HCT116 (cell line): ENCODE measurements at regions of chr2 and their contacts with region 1.

Region 1: GRCh38 chr2:156589381-156590079 is 153.4 kb downstream of the GPD2 start:
- DNase-seq: peak; percentile 27
- ATAC-seq: peak; percentile 74
- H3K4me3 ChIP-seq: no peak overlapping the region
- H3K27ac ChIP-seq: no peak overlapping the region
- H3K4me1 ChIP-seq: no peaks in the 10 kb centered on the region
- H3K27me3 ChIP-seq: no peaks in the 10 kb centered on the region
- CTCF ChIP-seq: peak; percentile 43 to 62 (median 59)
- POLR2A ChIP-seq: no peak
- RAD21 ChIP-seq: peak; percentile 88

Region 2: DNA sequence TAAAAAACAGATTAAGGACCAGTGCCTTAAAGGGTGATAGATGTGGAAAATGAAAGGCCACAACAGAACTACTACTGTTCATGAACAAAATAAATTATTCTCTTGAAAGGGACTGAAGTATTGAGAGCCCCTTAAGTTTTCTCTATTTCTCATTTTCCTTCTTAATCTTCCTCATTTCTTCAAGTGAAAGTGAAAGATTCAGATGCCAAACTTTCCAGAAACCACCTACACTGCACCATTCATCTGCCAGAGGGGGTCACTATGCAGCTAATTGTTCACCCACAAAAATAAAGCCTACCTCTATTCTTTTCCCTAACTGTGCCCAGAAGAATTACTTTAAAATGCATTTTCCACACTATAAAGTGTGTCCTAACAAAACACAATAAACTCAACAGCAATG is 397.1 kb before region 1 on chr2:
- CTCF ChIA-PET with region 1: interaction called, 3 read pairs
- POLR2A ChIA-PET with region 1: no interaction called
- RAD21 ChIA-PET with region 1: no interaction called
- intact Hi-C with region 1: loop called (anchors 10 kb)
- DNase-seq: no peak
- ATAC-seq: peak; percentile 63; the same call in 1 of the 2 replicates
- H3K4me3 ChIP-seq: no peak overlapping the region
- H3K27ac ChIP-seq: no peak overlapping the region
- H3K4me1 ChIP-seq: no peaks in the 10 kb centered on the region
- H3K27me3 ChIP-seq: no peaks in the 10 kb centered on the region
- CTCF ChIP-seq: peak in 2 of 3 experiments; percentile 28 to 32; a peak in 3 of 6 replicates
- POLR2A ChIP-seq: no peak
- RAD21 ChIP-seq: peak; percentile 54

Region 3: DNA sequence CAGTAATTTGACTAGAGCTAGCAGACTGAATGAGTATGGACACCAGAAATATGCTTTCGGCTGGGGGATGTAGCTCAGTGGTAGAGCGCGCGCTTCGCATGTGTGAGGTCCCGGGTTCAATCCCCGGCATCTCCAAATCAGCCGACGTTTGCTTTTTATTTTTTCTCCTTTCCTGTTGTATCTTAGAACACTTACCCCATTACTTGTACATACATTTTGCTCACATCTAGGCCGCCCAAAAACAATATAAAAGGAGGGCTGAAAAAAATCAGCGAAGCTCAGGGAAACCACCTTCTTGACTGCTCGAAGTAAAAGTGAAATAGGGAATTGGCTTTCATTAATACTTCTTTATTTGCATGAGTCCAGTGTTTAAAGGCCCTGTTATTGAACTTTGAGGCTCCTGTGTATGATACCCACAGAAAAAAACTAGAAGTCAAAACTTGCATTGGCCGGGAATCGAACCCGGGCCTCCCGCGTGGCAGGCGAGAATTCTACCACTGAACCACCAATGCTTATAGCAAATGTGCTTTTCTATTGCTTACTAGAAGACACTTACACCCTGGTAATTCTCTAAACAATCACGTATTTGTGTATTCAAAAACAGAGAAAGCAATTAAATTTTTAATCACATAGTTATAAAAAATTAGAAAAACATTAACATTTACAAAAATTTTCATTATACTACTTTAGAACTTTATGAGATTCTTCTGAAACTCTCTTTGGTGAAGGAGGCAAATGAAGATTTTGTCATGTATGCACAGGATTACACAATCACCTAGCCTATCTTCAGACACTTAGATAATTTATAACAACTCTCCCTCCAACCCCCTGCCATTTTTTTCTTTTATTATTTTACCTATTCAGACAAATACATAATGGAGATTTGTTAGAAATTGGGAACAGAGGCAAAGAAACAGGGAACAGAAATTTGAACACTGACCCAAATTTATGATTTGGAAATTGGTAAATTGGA is 188.5 kb before region 1 on chr2:
- CTCF ChIA-PET with region 1: interaction called, 6 read pairs
- POLR2A ChIA-PET with region 1: no interaction called
- RAD21 ChIA-PET with region 1: no interaction called
- intact Hi-C with region 1: loop called (anchors 2 kb)
- DNase-seq: peak; percentile 75
- ATAC-seq: peak; percentile 76
- H3K4me3 ChIP-seq: peak overlapping the region; percentile 37 to 60
- H3K27ac ChIP-seq: peak overlapping the region; percentile 82; the same call in 1 of the 2 replicates
- H3K4me1 ChIP-seq: peaks cover 12 to 49% of the 10 kb centered on the region in 2 experiments
- H3K27me3 ChIP-seq: no peaks in the 10 kb centered on the region
- CTCF ChIP-seq: no peak
- POLR2A ChIP-seq: no peak
- RAD21 ChIP-seq: peak; percentile 7; the same call in 1 of the 2 replicates

Region 4: GRCh38 chr2:156511803-156512202 is 77.7 kb before region 1 on chr2:
- CTCF ChIA-PET with region 1: no interaction called
- POLR2A ChIA-PET with region 1: no interaction called
- RAD21 ChIA-PET with region 1: no interaction called
- intact Hi-C with region 1: no loop called
- DNase-seq: no peak
- ATAC-seq: no peak
- H3K4me3 ChIP-seq: no peak overlapping the region
- H3K27ac ChIP-seq: no peak overlapping the region
- H3K4me1 ChIP-seq: no peaks in the 10 kb centered on the region
- H3K27me3 ChIP-seq: no peaks in the 10 kb centered on the region
- CTCF ChIP-seq: no peak
- POLR2A ChIP-seq: no peak
- RAD21 ChIP-seq: no peak

Region 5: GRCh38 chr2:157055660-157056199 is 466.2 kb after region 1 on chr2:
- CTCF ChIA-PET with region 1: no interaction called
- POLR2A ChIA-PET with region 1: no interaction called
- RAD21 ChIA-PET with region 1: no interaction called
- intact Hi-C with region 1: loop called (anchors 10 kb)
- DNase-seq: peak; percentile 22
- ATAC-seq: no peak
- H3K4me3 ChIP-seq: no peak overlapping the region
- H3K27ac ChIP-seq: peak overlapping the region; percentile 40; the same call in 1 of the 2 replicates
- H3K4me1 ChIP-seq: peaks cover 10 to 28% of the 10 kb centered on the region in 2 experiments
- H3K27me3 ChIP-seq: no peaks in the 10 kb centered on the region
- CTCF ChIP-seq: peak; percentile 46 to 73 (median 46); a peak in 5 of 6 replicates
- POLR2A ChIP-seq: no peak
- RAD21 ChIP-seq: peak; percentile 82